Activated naive CD8-positive, alpha-beta T cell treated with anti-CD3 and anti-CD28 coated beads, Interleukin-2, amount 10 ng/mL, durations not matched to agents 7 days and 5 days (primary cell): ENCODE measurements at regions of chr19 and their contacts with region 1.

Region 1: GRCh38 chr19:55339048-55339888 is at the start of gene KMT5C:
- DNase-seq: peak; percentile 99
- ATAC-seq: peak; percentile 87
- H3K4me3 Mint-ChIP-seq: peak within 1 kb of the TSS; percentile 97
- H3K27ac Mint-ChIP-seq: peak within 1 kb of the TSS; percentile 98
- H3K4me1 Mint-ChIP-seq: peaks cover 14% of the 10 kb centered on the region
- H3K27me3 Mint-ChIP-seq: peaks cover 16% of the 10 kb centered on the region
- total RNA-seq, gene KMT5C: 26.4 to 28.5 TPM

Region 2: GRCh38 chr19:55279770-55280643 is 59.3 kb before region 1 on chr19 and contains the start of gene HSPBP1:
- POLR2A ChIA-PET with region 1: interaction called, 16 read pairs
- DNase-seq: peak; percentile 99
- ATAC-seq: peak; percentile 87
- H3K4me3 Mint-ChIP-seq: peak within 1 kb of the TSS; percentile 99
- H3K27ac Mint-ChIP-seq: peak within 1 kb of the TSS; percentile 98
- H3K4me1 Mint-ChIP-seq: peaks cover 28% of the 10 kb centered on the region
- H3K27me3 Mint-ChIP-seq: peaks cover 9% of the 10 kb centered on the region
- total RNA-seq, gene HSPBP1: 19.5 to 20.3 TPM

Region 3: DNA sequence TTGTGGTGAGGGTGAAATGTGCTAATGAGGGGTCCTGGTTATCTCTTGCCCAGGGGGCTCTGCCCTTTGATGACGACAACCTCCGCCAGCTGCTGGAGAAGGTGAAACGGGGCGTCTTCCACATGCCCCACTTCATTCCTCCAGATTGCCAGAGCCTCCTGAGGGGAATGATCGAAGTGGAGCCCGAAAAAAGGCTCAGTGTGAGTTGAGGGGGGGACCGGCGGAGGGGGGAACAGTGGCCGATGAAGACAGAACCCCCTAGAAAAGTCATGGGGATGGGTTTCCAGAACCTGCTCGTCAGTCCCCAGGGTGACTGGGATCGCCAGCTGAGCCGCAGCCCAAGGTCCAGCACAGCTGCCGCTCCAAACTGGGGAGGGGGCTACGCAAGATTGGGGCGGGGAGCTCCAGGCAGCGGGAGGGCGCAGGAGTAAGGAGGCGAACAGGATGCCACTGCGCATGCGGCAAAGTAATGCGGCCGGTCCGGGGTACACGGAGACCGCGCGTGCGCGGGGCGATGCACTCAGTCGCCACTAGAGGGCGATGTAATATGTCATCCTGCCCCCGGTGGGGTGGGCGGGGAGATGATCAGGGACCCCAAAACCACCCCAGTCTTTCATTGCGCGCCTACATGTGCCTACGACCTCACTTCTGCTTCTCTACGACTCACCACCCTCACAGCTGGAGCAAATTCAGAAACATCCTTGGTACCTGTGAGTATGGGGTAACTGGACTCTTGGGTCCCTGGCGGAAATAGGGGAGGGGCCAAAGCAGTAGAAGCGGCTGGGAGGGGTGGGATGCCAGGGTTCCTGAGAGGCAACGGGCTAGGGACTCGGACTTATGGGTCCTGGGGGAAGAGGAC is 37.6 kb before region 1 on chr19:
- POLR2A ChIA-PET with region 1: interaction called, 15 read pairs
- DNase-seq: peak; percentile 98
- ATAC-seq: peak; percentile 91
- H3K4me3 Mint-ChIP-seq: peak overlapping the region; percentile 95
- H3K27ac Mint-ChIP-seq: peak overlapping the region; percentile 98
- H3K4me1 Mint-ChIP-seq: peaks cover 8% of the 10 kb centered on the region
- H3K27me3 Mint-ChIP-seq: peaks cover 3% of the 10 kb centered on the region

Region 4: GRCh38 chr19:55352040-55352439 is 12.8 kb after region 1 on chr19:
- POLR2A ChIA-PET with region 1: interaction called, 15 read pairs
- DNase-seq: peak; percentile 27
- ATAC-seq: no peak
- H3K4me3 Mint-ChIP-seq: no peak overlapping the region
- H3K27ac Mint-ChIP-seq: peak overlapping the region; percentile 35
- H3K4me1 Mint-ChIP-seq: peaks cover 16% of the 10 kb centered on the region
- H3K27me3 Mint-ChIP-seq: peaks cover 39% of the 10 kb centered on the region

Region 5: DNA sequence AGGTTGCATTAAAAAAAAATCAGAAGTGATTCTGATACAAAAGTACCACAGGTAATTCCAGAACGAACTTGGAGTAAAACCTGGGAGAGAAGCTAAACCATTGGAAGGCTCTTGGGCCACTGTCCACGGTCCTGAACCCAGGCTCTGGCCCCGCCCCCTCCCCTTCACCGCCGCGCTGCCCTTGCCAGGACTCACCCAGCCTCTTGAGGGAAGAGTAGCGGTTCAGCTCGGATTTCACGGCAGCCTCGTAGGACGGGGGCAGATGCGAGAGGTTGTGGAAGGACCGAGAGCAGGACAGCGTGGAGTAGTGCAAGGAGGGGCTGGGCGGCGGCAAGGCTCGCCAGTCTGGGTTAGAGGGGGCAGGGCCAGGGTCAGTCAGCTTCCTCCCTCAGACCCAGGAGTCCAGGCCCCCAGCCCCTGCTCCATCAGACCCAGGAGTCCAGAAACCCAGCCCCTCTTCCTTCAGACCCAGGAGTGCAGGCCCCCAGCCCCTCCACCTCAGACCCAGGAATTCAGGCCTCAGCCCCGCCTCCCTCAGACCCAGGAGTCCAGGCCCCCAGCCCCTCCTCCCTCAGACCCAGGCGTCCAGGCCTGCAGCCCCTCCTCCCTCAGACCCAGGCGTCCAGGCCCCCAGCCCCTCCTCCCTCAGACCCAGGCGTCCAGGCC is 98.3 kb after region 1 on chr19:
- POLR2A ChIA-PET with region 1: no interaction called
- DNase-seq: no peak
- ATAC-seq: peak; percentile 20
- H3K4me3 Mint-ChIP-seq: no peak overlapping the region
- H3K27ac Mint-ChIP-seq: no peak overlapping the region
- H3K4me1 Mint-ChIP-seq: peaks cover 12% of the 10 kb centered on the region
- H3K27me3 Mint-ChIP-seq: peaks cover 41% of the 10 kb centered on the region